CD4-positive, alpha-beta T cell (primary cell): ENCODE measurements at regions of chr7 and their contacts with region 1.

Region 1: DNA sequence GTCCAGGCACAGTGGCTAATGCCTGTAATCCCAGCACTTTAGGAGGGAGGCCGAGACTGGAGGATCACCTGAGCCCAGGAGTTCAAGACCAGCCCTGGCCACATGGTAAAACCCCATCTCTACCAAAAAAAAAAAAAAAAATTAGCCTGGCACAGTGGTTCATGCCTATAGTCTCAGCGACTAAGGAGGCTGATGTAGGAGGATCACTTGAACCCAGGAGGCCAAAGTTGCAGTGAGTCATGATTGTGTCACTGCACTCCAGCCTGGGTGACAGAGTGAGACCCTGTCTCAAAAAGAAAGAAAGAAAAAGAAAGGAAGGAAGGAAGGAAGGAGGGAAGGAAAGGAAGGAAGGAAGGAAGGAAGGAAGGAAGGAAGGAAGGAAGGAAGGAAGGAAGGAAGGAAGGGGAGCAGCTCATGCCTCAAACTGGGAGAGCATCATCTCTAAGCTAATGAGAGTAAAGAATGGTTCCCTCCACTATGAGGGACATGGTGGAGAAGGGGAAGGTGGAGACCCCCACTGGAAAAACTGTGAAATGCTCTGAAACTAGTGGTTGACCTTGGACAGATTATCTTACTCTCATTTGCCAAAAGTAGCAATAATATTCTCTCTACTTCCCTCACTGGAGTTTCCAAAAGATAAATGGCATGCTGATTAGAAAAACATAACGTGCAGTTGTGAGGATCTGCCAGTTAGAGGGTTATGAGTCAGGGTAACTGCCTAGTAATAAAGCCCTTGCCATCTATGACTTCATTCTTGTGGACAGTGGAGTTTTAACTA is 16.8 kb downstream of the GIMAP5 start:
- DNase-seq: peak in 3 of 14 experiments; percentile 58 to 71 (median 68)
- ATAC-seq: peak; percentile 10
- H3K4me3 ChIP-seq: no peak overlapping the region
- H3K4me3 Mint-ChIP-seq: peak overlapping the region; percentile 57
- H3K27ac ChIP-seq: peak overlapping the region; percentile 66 to 72
- H3K27ac Mint-ChIP-seq: peak overlapping the region; percentile 99
- H3K4me1 ChIP-seq: peaks cover 66% of the 10 kb centered on the region
- H3K4me1 Mint-ChIP-seq: peaks cover 80% of the 10 kb centered on the region
- H3K27me3 ChIP-seq: no peaks in the 10 kb centered on the region
- H3K27me3 Mint-ChIP-seq: peaks cover 5% of the 10 kb centered on the region
- CTCF ChIP-seq: peak; percentile 38

Region 2: DNA sequence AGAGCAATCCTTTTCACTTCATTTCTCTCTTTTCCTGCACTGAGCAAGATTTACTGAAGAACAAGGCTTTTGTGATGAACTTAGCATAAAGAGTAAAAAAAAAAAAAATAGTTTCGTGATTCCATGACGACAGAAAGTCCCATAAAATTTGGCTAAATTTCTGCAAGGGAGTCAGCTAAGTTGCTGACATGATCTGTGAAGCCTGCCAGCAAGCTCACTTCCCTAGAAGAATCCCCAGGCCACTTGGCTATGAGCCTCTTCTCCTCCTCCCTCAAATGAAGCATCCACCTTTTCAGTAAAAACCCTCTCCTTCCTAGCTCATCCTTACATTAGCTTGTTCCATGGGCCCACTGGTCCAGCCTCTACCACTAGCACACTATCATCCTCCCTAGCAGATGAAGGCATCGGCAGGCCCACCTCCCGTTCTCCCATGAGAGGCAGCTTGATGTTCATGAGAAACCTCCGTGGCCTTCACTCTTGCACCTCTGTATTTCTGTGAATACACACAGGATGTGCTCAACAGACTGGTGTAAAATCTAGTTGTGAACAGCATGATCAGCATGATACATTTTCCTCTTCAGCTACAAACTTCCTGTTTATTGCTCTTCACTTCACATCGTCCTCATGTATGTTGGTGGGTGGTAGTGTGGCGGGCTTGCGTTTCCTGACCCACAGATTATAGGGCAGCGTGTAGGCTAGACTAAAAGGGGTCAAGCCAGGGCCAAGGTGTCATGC is 272.7 kb before region 1 on chr7:
- CTCF ChIA-PET with region 1: interaction called, 3 read pairs
- POLR2A ChIA-PET with region 1: interaction called, 20 read pairs
- intact Hi-C with region 1: no loop called
- DNase-seq: peak; percentile 36 to 90 (median 58)
- ATAC-seq: peak; percentile 59
- H3K4me3 ChIP-seq: peak overlapping the region; percentile 20
- H3K4me3 Mint-ChIP-seq: peak overlapping the region; percentile 84
- H3K27ac ChIP-seq: peak overlapping the region; percentile 92 to 95
- H3K27ac Mint-ChIP-seq: peak overlapping the region; percentile 97
- H3K4me1 ChIP-seq: peaks cover 76% of the 10 kb centered on the region
- H3K4me1 Mint-ChIP-seq: peaks cover 95% of the 10 kb centered on the region
- H3K27me3 ChIP-seq: no peaks in the 10 kb centered on the region
- H3K27me3 Mint-ChIP-seq: no peaks in the 10 kb centered on the region
- CTCF ChIP-seq: no peak

Region 3: GRCh38 chr7:150514748-150515222 is 239.2 kb before region 1 on chr7 and contains the start of gene GIMAP7:
- CTCF ChIA-PET with region 1: interaction called, 3 read pairs
- POLR2A ChIA-PET with region 1: interaction called, 40 read pairs
- intact Hi-C with region 1: loop called (anchors 2 kb)
- DNase-seq: peak; percentile 59 to 85 (median 70)
- ATAC-seq: peak; percentile 82
- H3K4me3 ChIP-seq: peak within 1 kb of the TSS; percentile 79
- H3K4me3 Mint-ChIP-seq: peak within 1 kb of the TSS; percentile 100
- H3K27ac ChIP-seq: peak within 1 kb of the TSS; percentile 63 to 84
- H3K27ac Mint-ChIP-seq: peak within 1 kb of the TSS; percentile 93
- H3K4me1 ChIP-seq: peaks cover 42% of the 10 kb centered on the region
- H3K4me1 Mint-ChIP-seq: peaks cover 51% of the 10 kb centered on the region
- H3K27me3 ChIP-seq: no peaks in the 10 kb centered on the region
- H3K27me3 Mint-ChIP-seq: no peaks in the 10 kb centered on the region
- CTCF ChIP-seq: no peak
- total RNA-seq, gene GIMAP7: 48.4 to 50.7 TPM

Region 4: GRCh38 chr7:150631866-150632864 is 121.8 kb before region 1 on chr7 and contains the start of gene GIMAP6:
- CTCF ChIA-PET with region 1: no interaction called
- POLR2A ChIA-PET with region 1: interaction called, 41 read pairs
- intact Hi-C with region 1: no loop called
- DNase-seq: peak; percentile 21 to 76 (median 49)
- ATAC-seq: peak; percentile 68
- H3K4me3 ChIP-seq: peak within 1 kb of the TSS; percentile 79
- H3K4me3 Mint-ChIP-seq: peak within 1 kb of the TSS; percentile 96
- H3K27ac ChIP-seq: peak within 1 kb of the TSS; percentile 58 to 81
- H3K27ac Mint-ChIP-seq: peak within 1 kb of the TSS; percentile 84
- H3K4me1 ChIP-seq: peaks cover 60% of the 10 kb centered on the region
- H3K4me1 Mint-ChIP-seq: peaks cover 87% of the 10 kb centered on the region
- H3K27me3 ChIP-seq: no peaks in the 10 kb centered on the region
- H3K27me3 Mint-ChIP-seq: no peaks in the 10 kb centered on the region
- CTCF ChIP-seq: no peak
- total RNA-seq, gene GIMAP6: 14.3 to 14.9 TPM

Region 5: DNA sequence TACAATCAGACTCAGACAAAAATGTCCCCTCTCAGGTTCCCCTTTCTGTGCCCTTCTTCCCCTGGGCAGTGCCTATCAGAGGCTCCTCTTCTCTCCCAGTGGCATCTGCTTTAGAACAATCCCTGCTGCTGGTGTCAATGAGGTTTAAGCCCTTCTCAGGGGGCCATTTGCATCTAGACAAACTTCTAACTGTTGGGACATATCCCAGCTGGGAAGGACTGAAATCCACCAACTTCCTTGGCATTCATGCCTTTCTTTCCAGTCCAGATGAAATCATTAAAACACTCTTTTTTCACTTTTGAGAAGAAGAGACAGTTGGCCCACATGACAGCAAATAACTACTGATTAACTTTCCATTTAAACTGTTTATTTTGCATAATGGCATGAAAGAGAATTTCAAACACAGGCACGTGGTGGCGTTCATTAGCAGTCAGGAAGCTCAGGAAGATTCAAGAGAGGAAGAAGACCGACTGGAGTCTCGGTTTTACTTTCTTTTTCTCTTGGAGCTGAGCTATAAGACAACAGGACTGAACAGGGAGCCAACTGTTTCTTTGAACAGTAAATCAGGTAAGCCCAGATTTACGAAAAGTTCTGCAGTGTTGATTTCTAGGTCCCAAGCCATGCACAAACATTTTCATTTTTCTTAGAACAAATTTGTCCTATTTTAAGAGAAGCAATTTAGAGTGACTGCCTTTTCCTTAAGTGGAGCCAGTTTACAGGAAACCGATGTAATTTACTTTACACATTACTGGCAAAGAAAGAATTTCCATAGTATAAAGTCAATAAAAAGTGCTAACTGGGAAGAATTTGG is 68.6 kb before region 1 on chr7 and contains the start of gene GIMAP2:
- CTCF ChIA-PET with region 1: interaction called, 6 read pairs
- POLR2A ChIA-PET with region 1: interaction called, 27 read pairs
- intact Hi-C with region 1: loop called in 1 of 2 experiments (anchors 5 kb)
- DNase-seq: peak in 9 of 14 experiments; percentile 22 to 81 (median 48)
- ATAC-seq: peak; percentile 86
- H3K4me3 ChIP-seq: peak within 1 kb of the TSS; percentile 80
- H3K4me3 Mint-ChIP-seq: peak within 1 kb of the TSS; percentile 100
- H3K27ac ChIP-seq: peak within 1 kb of the TSS; percentile 78 to 95
- H3K27ac Mint-ChIP-seq: peak within 1 kb of the TSS; percentile 100
- H3K4me1 ChIP-seq: peaks cover 44% of the 10 kb centered on the region
- H3K4me1 Mint-ChIP-seq: peaks cover 85% of the 10 kb centered on the region
- H3K27me3 ChIP-seq: no peaks in the 10 kb centered on the region
- H3K27me3 Mint-ChIP-seq: no peaks in the 10 kb centered on the region
- CTCF ChIP-seq: no peak
- total RNA-seq, gene GIMAP2: 64.1 to 65.1 TPM

Region 6: DNA sequence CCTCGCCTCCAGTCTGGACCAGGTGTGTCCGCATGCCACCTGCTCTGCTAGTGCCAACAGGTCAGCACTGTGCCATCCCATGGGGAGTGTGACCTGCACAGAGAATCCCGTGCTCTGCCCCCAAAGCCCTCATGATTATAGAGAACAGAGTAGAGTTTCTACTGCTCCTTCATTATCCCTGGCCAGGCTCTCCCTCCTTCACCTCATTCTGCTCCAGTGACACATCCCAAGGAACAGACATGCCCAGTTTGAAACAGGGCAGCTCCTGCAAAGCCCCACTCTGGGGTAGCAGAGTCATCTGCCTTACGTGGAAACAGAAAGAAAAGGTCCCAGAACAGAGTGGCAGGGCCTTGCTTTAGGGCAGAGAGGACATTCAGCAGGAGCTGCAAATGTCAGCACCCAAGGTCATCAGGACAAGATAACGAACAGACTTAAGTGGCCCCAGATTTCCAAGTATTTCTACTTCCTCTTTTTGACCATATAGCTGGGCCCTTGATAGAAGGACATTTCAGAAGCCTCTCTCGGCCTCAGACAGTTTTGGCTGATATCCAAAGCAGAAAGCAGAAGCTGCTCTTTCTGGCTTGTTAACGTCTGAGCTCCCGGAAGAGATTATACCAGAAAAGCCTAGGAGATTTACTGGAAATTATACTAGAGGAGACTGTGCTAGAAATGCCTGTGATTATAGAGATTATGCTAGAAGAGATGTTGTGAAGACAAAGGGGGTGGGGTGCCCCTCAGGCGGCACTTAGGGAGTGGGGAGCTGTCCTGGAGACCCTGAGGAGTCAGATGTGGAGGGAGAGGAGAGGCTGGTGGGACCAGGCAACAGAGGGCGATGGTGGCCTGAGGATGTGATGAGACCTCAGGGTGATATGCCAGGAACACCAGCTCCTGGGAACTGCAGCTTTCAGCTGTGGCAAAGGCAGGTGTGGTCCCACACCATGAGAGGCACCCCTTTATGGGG is 33.6 kb after region 1 on chr7:
- CTCF ChIA-PET with region 1: no interaction called
- POLR2A ChIA-PET with region 1: no interaction called
- intact Hi-C with region 1: no loop called
- DNase-seq: peak in 3 of 14 experiments; percentile 16 to 56 (median 51)
- ATAC-seq: no peak
- H3K4me3 ChIP-seq: no peak overlapping the region
- H3K4me3 Mint-ChIP-seq: no peak overlapping the region
- H3K27ac ChIP-seq: no peak overlapping the region
- H3K27ac Mint-ChIP-seq: no peak overlapping the region
- H3K4me1 ChIP-seq: no peaks in the 10 kb centered on the region
- H3K4me1 Mint-ChIP-seq: no peaks in the 10 kb centered on the region
- H3K27me3 ChIP-seq: peaks cover 0 to 3% of the 10 kb centered on the region in 2 experiments
- H3K27me3 Mint-ChIP-seq: peaks cover 13% of the 10 kb centered on the region
- CTCF ChIP-seq: no peak

Region 7: GRCh38 chr7:151400626-151401315 is 646.8 kb after region 1 on chr7:
- CTCF ChIA-PET with region 1: no interaction called
- POLR2A ChIA-PET with region 1: no interaction called
- intact Hi-C with region 1: no loop called
- DNase-seq: peak in 3 of 14 experiments; percentile 30 to 46 (median 42)
- ATAC-seq: no peak
- H3K4me3 ChIP-seq: no peak overlapping the region
- H3K4me3 Mint-ChIP-seq: no peak overlapping the region
- H3K27ac ChIP-seq: no peak overlapping the region
- H3K27ac Mint-ChIP-seq: no peak overlapping the region
- H3K4me1 ChIP-seq: peaks cover 57% of the 10 kb centered on the region
- H3K4me1 Mint-ChIP-seq: peaks cover 6% of the 10 kb centered on the region
- H3K27me3 ChIP-seq: no peaks in the 10 kb centered on the region
- H3K27me3 Mint-ChIP-seq: no peaks in the 10 kb centered on the region
- CTCF ChIP-seq: no peak